Activated B cell treated with CpG ODN at 0.5 μM for 24 hours (primary cell): ENCODE measurements at regions of chr10 and their contacts with region 1.

Region 1: DNA sequence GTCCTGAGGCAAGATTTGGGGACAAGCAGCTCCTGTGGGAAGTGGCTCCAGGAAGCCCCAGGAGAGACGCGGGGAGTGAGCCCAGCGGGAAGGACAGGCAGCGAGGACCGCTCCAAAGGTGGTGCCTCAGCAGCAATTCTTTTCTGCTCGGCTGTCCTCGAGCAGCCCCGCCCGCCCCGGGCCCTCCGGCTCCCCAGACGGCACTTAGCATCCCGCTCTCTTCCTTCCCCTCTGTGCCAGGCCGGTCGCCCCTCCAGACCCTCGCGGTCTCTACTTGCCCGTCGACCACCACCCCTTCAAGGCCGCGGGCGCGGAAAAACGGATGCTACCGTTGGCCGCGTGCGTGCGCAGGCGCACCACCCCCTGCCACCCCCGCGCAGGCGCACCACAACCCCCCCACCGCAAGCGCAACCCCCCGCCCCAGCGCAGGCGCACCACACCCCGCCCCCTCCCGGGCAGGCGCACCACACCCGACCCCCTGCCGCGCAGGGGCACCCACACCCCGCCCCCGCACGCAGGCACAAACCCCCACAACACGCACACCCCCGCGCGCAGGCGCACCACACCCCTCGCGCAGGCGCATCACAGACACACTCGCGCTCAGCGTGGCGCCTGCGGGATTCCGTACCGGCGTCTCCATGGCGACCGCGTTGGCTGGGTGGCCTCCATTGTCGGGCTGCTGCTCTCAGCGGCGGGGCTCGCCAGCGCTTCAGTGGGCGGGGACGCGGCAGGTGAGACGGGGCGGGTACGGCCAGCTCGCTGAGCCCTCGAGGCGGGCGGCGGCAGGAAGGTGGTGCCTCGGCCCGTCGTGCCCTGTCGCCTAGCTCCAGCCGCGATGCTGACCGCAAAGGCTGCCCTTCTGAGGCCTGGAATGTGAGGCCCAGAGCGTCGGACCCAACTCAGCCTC is at the start of gene LRRC27:
- DNase-seq: peak; percentile 100
- ATAC-seq: peak; percentile 80
- H3K4me3 Mint-ChIP-seq: peak within 1 kb of the TSS; percentile 94
- H3K27ac Mint-ChIP-seq: peak within 1 kb of the TSS; percentile 98
- H3K4me1 Mint-ChIP-seq: peaks cover 81% of the 10 kb centered on the region
- H3K27me3 Mint-ChIP-seq: no peaks in the 10 kb centered on the region
- CTCF ChIP-seq: no peak
- total RNA-seq, gene LRRC27: 9.1 and 15.2 TPM in 2 replicates

Region 2: DNA sequence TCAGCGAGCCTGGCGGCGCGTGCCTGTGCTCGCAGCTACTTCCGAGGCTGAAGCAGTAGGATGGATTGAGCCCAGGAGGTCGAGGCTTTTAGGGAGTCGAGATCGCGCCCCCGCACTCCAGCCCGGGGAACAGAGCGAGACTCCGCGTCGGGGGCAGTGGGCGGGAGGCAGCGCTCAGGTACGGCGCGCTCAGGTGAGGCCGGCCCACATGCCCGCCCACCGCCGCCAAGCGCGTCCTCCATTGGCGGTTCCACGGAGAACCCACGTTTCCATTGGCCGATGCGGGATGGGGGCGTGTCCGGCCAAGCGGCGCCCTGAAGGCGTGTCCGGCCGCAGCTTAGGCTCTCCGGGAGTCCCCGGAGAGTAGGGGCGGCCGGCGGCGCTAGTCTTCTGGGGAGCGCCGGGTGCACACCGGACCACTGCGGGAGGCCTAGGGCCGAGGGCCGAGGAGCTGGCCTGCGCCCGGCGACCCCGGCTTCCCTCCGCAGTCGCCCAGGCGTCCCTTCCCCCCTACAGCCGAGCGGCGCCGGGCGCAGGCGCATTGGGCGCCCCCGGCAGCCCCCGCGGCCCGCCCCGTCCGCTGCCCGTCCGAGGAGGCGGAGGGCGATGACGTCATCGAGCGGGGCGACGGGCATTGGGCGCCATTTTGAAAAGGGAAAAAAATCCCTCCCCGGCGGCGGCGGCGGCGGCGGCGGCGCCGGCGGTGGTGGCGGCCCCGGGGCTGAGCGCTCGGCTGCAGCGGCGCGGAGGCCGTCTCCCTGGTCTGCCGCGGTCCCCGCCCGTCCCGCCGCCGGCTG is 431.2 kb before region 1 on chr10 and contains the start of gene PPP2R2D:
- CTCF ChIA-PET with region 1: no interaction called
- POLR2A ChIA-PET with region 1: interaction called, 3 read pairs
- intact Hi-C with region 1: loop called (anchors 2 kb)
- DNase-seq: peak; percentile 96
- ATAC-seq: peak; percentile 91
- H3K4me3 Mint-ChIP-seq: peak within 1 kb of the TSS; percentile 89
- H3K27ac Mint-ChIP-seq: peak within 1 kb of the TSS; percentile 82
- H3K4me1 Mint-ChIP-seq: peaks cover 39% of the 10 kb centered on the region
- H3K27me3 Mint-ChIP-seq: peaks cover 6% of the 10 kb centered on the region
- CTCF ChIP-seq: no peak
- total RNA-seq, gene PPP2R2D: 28.0 and 32.7 TPM in 2 replicates

Region 3: DNA sequence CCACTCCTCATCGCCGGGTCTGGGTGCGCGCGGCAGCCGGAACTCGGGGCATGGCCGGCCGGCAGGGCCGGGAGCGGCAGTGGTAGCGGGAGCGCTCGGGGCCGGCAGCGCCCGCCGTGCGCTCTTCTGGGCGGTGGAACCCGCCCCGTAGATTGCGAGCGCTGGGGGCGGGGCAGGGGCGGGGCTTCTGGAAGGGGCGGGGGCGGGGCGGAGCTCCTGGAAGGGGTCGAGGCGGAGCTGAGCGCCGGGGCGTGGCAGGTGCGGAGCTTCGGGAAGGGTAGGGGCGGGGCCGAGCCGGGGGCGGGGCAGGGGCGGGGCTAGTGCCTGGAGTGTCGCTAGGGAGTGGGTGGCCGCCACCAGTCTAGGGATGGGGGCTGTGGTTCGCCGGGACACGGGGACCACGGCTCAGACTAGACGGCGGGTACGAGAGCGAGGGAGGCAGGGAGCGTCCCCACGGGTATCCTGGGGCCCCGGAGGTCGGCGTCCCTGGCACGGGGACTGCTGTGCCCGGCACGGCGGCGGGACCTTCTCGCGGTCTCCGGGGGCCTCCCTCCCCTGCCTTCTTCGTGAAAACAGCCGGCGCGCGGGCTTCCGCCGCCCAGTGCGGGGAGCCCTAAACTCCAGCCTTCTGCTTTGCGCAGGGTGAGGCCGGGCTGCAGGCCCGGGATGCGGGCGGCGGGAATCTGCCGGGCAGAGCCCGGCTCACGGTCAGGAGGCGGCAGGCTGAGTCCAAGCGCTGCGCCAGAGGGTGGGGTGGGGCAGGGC is 23.8 kb before region 1 on chr10 and contains the start of gene STK32C:
- CTCF ChIA-PET with region 1: no interaction called
- POLR2A ChIA-PET with region 1: interaction called, 13 read pairs
- intact Hi-C with region 1: loop called (anchors 1 kb)
- DNase-seq: peak; percentile 79
- ATAC-seq: peak; percentile 90
- H3K4me3 Mint-ChIP-seq: peak within 1 kb of the TSS; percentile 86
- H3K27ac Mint-ChIP-seq: no peak within 1 kb of the TSS
- H3K4me1 Mint-ChIP-seq: peaks cover 11% of the 10 kb centered on the region
- H3K27me3 Mint-ChIP-seq: peaks cover 11% of the 10 kb centered on the region
- CTCF ChIP-seq: no peak
- total RNA-seq, gene STK32C: 11.0 and 13.8 TPM in 2 replicates

Region 4: GRCh38 chr10:132353456-132354355 is 21.9 kb after region 1 on chr10:
- CTCF ChIA-PET with region 1: no interaction called
- POLR2A ChIA-PET with region 1: no interaction called
- intact Hi-C with region 1: loop called (anchors 2 kb)
- DNase-seq: no peak
- ATAC-seq: no peak
- H3K4me3 Mint-ChIP-seq: no peak overlapping the region
- H3K27ac Mint-ChIP-seq: no peak overlapping the region
- H3K4me1 Mint-ChIP-seq: peaks cover 7% of the 10 kb centered on the region
- H3K27me3 Mint-ChIP-seq: no peaks in the 10 kb centered on the region
- CTCF ChIP-seq: no peak

Region 5: DNA sequence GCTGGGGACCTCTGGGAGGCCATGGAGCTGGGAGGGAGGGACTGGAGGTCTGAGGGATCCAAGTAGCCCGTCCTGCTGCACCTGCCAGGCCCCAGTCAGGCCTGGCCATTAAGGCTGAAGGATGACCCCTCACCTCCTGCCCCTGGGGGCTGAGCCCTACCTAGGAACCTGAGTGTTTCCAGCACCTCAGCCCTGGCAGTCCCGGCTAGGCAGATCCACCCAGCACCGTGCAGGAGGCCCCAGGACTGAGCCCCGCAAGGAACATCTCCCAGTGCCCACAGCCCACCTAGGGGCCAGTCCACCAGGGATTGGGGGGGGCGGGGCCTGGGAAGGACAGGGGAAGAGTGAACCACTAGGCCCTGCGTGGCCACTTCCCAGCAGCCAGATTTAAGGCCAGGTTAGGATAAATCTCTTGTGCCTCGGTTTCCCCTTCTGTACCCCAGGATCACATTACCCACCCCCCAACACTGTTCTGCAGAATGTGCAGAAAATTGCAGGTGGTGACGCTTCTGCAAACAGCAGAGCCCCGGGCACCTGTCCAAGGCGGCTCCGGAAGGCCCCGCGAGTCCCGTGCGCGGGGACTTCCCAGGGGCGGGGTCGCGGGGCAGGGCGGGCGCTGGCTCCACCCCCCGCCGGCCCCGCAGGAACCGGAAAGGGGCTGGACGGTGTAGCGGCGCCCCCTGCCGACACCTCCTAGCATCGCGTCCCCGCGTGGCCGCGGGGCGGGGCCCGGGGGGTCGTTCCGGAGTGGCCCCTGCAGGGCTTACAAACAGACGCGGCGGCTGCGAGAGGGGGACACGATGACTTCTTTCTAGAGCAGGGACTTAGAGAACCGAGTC is 121.1 kb after region 1 on chr10:
- CTCF ChIA-PET with region 1: no interaction called
- POLR2A ChIA-PET with region 1: interaction called, 7 read pairs
- intact Hi-C with region 1: loop called (anchors 1 kb)
- DNase-seq: peak; percentile 95
- ATAC-seq: peak; percentile 90
- H3K4me3 Mint-ChIP-seq: peak overlapping the region; percentile 38
- H3K27ac Mint-ChIP-seq: peak overlapping the region; percentile 77
- H3K4me1 Mint-ChIP-seq: peaks cover 24% of the 10 kb centered on the region
- H3K27me3 Mint-ChIP-seq: no peaks in the 10 kb centered on the region
- CTCF ChIP-seq: peak; percentile 66

Region 6: GRCh38 chr10:133373104-133373624 is 1041.4 kb after region 1 on chr10 and contains the start of gene ECHS1:
- CTCF ChIA-PET with region 1: no interaction called
- POLR2A ChIA-PET with region 1: no interaction called
- intact Hi-C with region 1: loop called (anchors 10 kb)
- DNase-seq: peak; percentile 96
- ATAC-seq: peak; percentile 96
- H3K4me3 Mint-ChIP-seq: peak within 1 kb of the TSS; percentile 83
- H3K27ac Mint-ChIP-seq: peak within 1 kb of the TSS; percentile 88
- H3K4me1 Mint-ChIP-seq: peaks cover 24% of the 10 kb centered on the region
- H3K27me3 Mint-ChIP-seq: no peaks in the 10 kb centered on the region
- CTCF ChIP-seq: no peak
- total RNA-seq, gene ECHS1: 37.7 and 39.4 TPM in 2 replicates